Tibial artery (tissue), 4 donors: ENCODE measurements at regions of chr7 and their contacts with region 1.

Region 1: DNA sequence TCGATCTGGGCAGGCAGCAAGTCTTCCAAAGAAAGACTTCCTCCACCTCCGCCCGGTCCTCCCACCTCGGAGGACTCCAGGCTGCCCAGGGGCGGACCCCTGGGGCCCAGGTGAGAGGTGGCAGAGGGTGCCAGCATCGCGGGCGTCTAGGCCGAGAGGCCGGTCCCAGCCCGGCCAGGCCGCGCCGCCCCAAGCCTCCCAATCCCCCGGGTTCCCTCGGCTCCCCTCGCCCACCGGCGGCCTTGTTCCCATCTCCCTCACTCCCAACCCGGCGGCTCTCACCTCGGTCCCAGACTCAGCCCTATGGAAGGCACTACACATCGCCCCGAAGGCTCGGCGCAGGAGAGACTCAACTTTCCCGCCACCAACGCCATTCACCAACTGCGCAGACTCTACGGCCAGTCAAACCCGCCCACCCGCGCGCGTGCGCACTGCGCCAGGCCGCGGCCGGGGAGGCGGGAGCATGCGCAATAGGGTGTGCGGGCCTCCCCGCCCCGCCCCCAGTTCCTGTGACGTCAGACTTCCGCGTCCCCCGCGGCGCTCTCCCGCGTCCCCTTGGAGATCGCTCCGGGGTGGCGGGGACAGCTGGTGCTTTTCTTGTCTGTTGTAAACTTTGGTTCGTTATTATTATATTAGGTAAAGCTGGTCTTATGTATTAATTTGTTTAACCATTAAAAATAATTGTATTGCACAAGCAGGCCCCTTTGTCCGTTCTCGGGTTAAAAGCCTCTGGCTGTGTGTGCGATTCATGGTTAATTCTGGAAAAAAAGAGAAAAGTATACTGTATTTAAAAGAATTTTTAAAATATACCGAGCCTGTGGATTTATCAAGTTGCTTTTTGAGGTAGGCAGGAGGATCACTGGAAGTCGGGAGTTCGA is at the start of gene XRCC2:
- DNase-seq: peak; percentile 90 to 94
- H3K4me3 ChIP-seq: peak within 1 kb of the TSS; percentile 49 to 67
- H3K27ac ChIP-seq: peak within 1 kb of the TSS; percentile 69 to 79
- H3K4me1 ChIP-seq: peaks cover 0 to 12% (median 9%) of the 10 kb centered on the region in 4 donors
- H3K27me3 ChIP-seq: no peaks in the 10 kb centered on the region
- CTCF ChIP-seq: no peak

Region 2: DNA sequence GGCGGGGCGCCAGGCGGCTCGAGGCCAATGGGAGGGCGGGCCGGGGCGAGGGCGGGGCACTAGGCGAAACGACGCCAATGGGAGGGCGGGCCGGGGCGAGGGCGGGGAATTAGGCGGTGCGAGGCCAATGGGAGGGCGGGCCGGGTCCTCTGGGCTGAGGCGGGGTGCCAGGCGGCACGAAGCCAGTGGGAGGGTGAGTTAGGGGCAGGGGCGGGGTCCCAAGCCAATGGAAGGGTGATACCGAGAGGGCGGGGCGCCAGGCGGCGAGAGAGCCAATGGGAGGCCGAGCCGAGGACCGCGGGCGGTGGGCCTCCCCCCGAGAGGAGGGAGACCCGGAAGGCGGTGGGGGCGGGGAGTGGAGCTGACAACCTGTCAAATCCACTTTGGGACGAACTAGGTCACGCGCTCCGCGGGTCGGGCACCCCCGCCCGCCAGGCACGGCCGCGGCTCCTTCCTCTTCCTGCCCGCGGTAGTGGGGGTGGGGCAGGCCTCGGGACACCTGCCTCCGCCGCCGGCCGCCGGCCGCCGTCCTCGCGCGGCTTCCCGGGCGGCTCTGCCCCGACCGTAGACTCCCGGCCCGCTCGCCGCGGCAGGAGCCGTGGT is 212.2 kb before region 1 on chr7:
- intact Hi-C with region 1: loop called (anchors 5 kb)
- DNase-seq: peak; percentile 100
- H3K4me3 ChIP-seq: peak overlapping the region; percentile 95 to 100
- H3K27ac ChIP-seq: peak overlapping the region; percentile 99 to 100
- H3K4me1 ChIP-seq: peaks cover 0 to 13% (median 11%) of the 10 kb centered on the region in 4 donors
- H3K27me3 ChIP-seq: no peaks in the 10 kb centered on the region
- CTCF ChIP-seq: peak in 1 of 2 experiments; percentile 7

Region 3: GRCh38 chr7:152633504-152633903 is 42.5 kb before region 1 on chr7:
- intact Hi-C with region 1: no loop called
- DNase-seq: no peak
- H3K4me3 ChIP-seq: no peak overlapping the region
- H3K27ac ChIP-seq: no peak overlapping the region
- H3K4me1 ChIP-seq: no peaks in the 10 kb centered on the region
- H3K27me3 ChIP-seq: peaks cover 0 to 8% of the 10 kb centered on the region in 2 donors
- CTCF ChIP-seq: no peak

Region 4: DNA sequence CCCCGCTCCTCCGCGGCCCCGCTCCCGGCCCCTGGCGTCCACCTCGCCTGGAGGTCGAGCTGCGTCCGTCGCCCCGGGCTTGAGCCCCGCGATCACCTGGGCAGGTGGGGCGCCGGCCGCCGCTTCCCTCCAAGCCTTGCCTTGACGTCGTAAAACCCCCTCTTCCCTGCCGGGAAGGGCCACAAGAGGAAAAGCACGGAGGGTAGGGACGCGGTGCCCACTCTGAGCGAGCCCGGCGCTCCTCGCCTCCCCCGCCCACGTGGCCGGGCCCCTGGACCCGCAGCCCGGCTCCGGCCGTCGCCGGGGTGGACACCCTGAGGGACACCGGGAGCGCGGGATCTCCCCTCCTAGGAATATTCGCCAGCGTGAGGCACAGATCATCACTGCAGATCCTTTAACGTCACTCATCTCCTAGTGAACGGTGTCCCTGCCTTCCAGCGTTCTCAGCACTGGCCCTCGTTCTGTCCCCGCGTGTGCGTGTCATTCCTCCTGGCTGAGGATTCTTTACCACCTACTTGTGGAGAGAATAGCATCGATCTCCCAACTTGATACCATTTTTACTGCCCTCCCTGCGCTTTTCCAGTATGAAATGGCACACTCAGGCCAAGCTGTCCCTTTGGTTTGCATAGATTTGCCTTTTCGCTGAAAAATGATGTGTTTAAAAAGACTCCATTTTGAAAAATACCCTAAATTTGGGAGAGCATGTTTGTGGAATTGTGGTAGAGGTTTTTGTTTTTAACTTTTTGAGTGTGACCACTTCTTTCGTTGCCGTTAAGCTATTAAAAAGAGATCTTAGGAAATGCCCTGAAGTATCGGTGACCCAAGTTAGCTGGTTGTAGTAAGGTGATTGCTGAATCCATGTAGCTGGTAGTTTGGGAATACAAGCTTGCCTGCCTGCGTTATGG is 84.2 kb after region 1 on chr7:
- intact Hi-C with region 1: loop called (anchors 2 kb)
- DNase-seq: peak; percentile 24 to 69
- H3K4me3 ChIP-seq: peak overlapping the region; percentile 75 to 98
- H3K27ac ChIP-seq: peak overlapping the region; percentile 90 to 93
- H3K4me1 ChIP-seq: peaks cover 0 to 18% (median 6%) of the 10 kb centered on the region in 4 donors
- H3K27me3 ChIP-seq: no peaks in the 10 kb centered on the region
- CTCF ChIP-seq: no peak